ENCODE measurements at regions of chr5 and their contacts with region 1.

Region 1: DNA sequence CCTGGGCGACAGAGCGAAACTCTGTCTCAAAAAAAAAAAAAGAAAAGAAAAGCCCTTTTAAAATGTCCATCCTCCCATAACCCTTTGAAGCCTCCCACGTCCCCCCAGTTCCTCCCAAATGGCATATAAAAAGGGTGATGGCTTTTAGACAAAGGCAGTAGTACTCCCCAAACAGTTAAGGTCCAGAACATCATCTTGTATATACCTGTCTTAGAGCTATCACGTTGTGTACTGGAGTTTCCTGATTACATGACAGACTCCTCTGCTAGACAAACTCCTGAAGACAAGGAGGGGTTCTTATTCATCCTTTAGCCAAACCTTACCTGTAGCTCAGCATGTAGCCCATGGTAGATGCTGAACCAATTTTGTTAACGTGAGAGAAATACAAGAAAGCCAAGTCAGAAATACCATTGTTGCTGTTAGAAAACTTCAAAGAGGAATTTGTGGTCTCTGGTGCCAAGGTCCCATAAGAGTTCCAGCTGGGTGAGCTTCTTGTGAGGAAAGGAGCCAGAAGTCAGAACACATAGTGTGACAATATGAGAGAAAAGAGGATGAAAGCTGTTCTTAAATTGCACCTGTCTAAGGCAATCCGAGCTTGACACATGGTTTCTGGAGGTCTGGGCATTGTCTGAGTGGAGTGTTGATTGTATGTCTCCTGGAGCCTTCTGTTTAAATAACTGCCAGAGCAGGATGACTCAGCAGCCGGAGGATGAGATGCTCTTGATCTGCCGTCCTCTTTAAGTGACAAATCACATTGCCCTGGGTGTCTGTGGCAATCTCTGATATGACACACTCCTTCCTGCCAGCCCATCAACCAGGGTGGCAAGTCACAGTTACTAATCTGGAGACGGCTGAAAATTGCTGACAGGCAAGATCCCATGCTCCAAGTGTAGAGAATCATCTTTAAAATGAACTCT is 69.1 kb downstream of the ARRDC3 start:
- DNase-seq: peak in 1 of 2 donors; percentile 89
- H3K4me3 ChIP-seq: no peak overlapping the region
- H3K27ac ChIP-seq: no peak overlapping the region
- H3K4me1 ChIP-seq: peaks cover 37% of the 10 kb centered on the region
- H3K27me3 ChIP-seq: no peaks in the 10 kb centered on the region
- CTCF ChIP-seq: no peak
- POLR2A ChIP-seq: no peak

Region 2: DNA sequence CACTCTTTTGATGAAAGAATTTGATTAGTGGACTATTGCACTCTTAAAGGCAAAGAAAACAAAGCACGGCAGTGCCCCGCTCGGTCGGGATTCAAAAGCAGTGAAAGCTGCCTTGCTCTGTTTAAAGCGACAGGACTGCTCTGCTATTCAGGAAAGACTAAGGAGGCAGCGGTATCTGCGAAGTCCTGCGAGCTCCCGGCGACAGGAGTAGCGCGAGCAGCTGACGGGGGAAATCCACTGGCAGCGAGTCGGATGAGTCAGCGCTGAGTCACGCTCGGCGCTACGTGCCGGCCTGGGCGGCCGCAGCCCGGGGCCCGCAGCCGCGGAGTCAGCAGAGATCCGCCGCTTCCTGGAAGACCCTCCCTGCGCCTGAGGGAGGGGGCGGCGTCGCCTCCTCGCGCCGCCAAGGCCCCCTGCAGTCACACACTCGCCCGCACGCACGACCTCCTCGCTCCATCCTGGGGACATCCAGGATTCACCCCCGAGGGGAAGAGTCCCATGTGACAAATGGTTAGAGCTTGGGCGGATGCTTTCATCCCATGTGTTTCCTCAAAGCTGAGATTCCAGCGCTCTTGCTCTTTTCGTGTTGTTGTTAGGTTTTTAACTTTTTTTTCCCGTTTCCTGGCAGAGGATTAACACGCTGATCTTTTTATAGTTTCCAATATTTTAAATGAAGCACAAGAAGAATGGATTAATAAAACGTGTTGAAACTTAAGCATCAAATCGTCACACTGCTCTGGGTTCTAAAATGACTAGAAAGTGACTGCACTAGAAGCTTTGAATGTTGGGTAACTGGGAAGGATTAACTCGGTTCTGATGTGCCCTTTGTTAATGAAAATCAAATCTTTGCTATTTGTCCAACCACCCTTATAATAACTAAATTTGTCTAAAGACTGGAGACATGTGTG is 33.4 kb before region 1 on chr5:
- intact Hi-C with region 1: loop called (anchors 1 kb)
- DNase-seq: peak in 1 of 2 donors; percentile 97
- H3K4me3 ChIP-seq: peak overlapping the region; percentile 52 to 64
- H3K27ac ChIP-seq: peak overlapping the region; percentile 82
- H3K4me1 ChIP-seq: peaks cover 30% of the 10 kb centered on the region
- H3K27me3 ChIP-seq: no peaks in the 10 kb centered on the region
- CTCF ChIP-seq: no peak
- POLR2A ChIP-seq: peak in 1 of 2 donors; percentile 48

Region 3: GRCh38 chr5:91499943-91500531 is 186.0 kb after region 1 on chr5:
- intact Hi-C with region 1: no loop called
- DNase-seq: no peak
- H3K4me3 ChIP-seq: no peak overlapping the region
- H3K27ac ChIP-seq: no peak overlapping the region
- H3K4me1 ChIP-seq: no peaks in the 10 kb centered on the region
- H3K27me3 ChIP-seq: no peaks in the 10 kb centered on the region
- CTCF ChIP-seq: peak in 2 of 3 experiments; percentile 35 to 57
- POLR2A ChIP-seq: no peak

Region 4: GRCh38 chr5:91521334-91521733 is 207.3 kb after region 1 on chr5:
- intact Hi-C with region 1: no loop called
- DNase-seq: no peak
- H3K4me3 ChIP-seq: no peak overlapping the region
- H3K27ac ChIP-seq: no peak overlapping the region
- H3K4me1 ChIP-seq: no peaks in the 10 kb centered on the region
- H3K27me3 ChIP-seq: no peaks in the 10 kb centered on the region
- CTCF ChIP-seq: no peak
- POLR2A ChIP-seq: no peak